H1 (cell line): ENCODE measurements at regions of chrX and their contacts with region 1.

Region 1: DNA sequence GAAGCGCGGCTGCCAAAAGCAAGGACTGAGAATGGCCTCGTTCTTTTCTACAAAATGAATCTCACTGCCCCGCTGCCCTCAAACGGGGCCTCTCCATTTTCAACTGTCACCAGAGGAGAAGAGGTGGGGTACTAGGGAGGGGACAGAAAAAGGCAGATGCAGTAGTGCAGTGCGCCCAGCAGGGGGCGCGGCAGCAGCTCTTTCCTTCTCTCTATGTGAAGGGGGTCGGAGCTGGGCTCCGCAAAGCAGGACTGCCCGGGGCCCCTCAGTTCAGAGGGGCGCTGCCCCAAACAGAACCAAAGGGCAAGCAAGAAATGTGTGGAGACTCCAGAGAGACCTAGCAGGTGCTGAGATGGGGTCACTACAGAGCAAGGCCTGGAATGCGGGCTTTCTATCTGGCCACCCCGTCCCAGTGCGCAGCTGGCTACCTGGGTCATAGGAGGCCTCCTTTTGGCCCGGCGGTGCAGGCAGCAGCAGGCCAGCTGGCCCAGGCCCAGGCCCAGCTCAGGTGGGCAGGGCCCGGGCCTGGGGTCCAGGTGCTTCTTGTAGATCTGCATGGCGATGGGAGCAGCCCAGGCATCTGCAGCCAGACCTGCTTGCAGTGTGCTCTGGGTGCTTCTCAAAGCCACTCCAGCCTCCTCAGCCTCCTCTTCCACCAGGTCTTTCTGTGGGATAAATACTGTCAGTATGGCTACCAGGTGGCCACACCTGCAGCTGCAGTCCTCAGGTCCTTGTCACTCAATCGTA is 5.9 kb downstream of the IRAK1 start:
- DNase-seq: peak in 1 of 2 experiments; percentile 72
- H3K4me3 ChIP-seq: no peak overlapping the region
- H3K27ac ChIP-seq: no peak overlapping the region
- H3K4me1 ChIP-seq: peaks cover 0 to 7% (median 3%) of the 10 kb centered on the region in 4 experiments; a peak in 4 of 7 replicates
- H3K27me3 ChIP-seq: no peaks in the 10 kb centered on the region
- CTCF ChIP-seq: peak in 2 of 3 experiments; percentile 62 to 63; a peak in 3 of 4 replicates
- EP300 ChIP-seq: no peak
- POLR2A ChIP-seq: no peak
- RAD21 ChIP-seq: peak; percentile 59 to 62

Region 2: DNA sequence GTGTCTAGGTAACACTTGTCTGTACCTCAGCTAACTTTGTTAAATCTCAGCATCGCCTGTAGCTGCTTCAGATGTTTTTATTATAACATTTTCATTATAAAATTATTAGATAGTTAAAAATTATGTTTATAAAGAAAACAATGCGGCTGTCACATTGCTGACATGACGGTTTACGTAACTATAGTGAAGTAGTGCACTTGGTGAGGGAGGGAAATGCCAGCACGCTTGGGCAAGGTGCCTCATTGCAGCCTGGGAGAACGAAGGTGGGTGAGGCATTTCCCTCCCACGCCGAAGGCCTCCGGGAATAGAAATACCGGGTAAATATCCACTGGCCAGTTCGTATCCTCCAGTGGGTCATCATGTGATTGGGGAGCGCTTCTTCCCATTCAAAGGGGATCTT is 25.3 kb before region 1 on chrX:
- CTCF ChIA-PET with region 1: no interaction called
- POLR2A ChIA-PET with region 1: no interaction called
- DNase-seq: no peak
- H3K4me3 ChIP-seq: no peak overlapping the region
- H3K27ac ChIP-seq: no peak overlapping the region
- H3K4me1 ChIP-seq: no peaks in the 10 kb centered on the region
- H3K27me3 ChIP-seq: no peaks in the 10 kb centered on the region
- CTCF ChIP-seq: no peak
- EP300 ChIP-seq: no peak
- POLR2A ChIP-seq: no peak
- RAD21 ChIP-seq: no peak

Region 3: DNA sequence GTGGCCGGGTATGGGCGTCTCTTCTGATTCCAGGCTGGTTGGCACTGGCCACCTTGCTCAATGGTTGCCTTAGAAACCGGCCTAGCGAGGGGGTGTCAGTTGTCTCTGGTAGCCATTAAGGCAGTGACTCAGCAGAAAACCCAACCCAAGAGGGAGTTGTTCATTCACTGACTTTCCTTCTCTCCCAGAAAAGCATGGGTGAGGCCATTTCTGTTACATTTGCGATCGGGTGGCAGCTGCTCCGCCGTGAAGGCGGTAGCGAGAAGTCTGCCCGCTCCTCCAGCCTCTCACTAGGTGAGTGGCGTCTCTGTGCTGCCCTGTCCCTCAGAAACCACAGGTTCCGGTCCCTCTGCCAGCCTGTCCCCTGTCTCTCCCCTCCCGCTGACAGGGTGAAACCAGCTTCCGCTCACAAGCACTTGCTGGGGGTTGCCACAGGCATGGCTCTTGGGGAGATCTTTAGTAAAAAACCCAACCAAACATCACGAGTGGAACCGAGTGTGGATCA is 11.5 kb before region 1 on chrX:
- CTCF ChIA-PET with region 1: interaction called, 10 read pairs
- POLR2A ChIA-PET with region 1: interaction called, 6 read pairs
- DNase-seq: no peak
- H3K4me3 ChIP-seq: no peak overlapping the region
- H3K27ac ChIP-seq: no peak overlapping the region; the same call in 1 of the 2 replicates
- H3K4me1 ChIP-seq: peaks cover 0 to 8% (median 0%) of the 10 kb centered on the region in 4 experiments; a peak in 2 of 7 replicates
- H3K27me3 ChIP-seq: no peaks in the 10 kb centered on the region
- CTCF ChIP-seq: no peak
- EP300 ChIP-seq: no peak
- POLR2A ChIP-seq: no peak
- RAD21 ChIP-seq: no peak

Region 4: GRCh38 chrX:154025230-154025629 is 11.4 kb after region 1 on chrX:
- CTCF ChIA-PET with region 1: interaction called, 29 read pairs
- POLR2A ChIA-PET with region 1: interaction called, 7 read pairs
- DNase-seq: no peak
- H3K4me3 ChIP-seq: no peak overlapping the region
- H3K27ac ChIP-seq: no peak overlapping the region
- H3K4me1 ChIP-seq: peaks cover 2 to 25% (median 9%) of the 10 kb centered on the region in 4 experiments
- H3K27me3 ChIP-seq: no peaks in the 10 kb centered on the region
- CTCF ChIP-seq: no peak
- EP300 ChIP-seq: no peak
- POLR2A ChIP-seq: no peak
- RAD21 ChIP-seq: no peak

Region 5: DNA sequence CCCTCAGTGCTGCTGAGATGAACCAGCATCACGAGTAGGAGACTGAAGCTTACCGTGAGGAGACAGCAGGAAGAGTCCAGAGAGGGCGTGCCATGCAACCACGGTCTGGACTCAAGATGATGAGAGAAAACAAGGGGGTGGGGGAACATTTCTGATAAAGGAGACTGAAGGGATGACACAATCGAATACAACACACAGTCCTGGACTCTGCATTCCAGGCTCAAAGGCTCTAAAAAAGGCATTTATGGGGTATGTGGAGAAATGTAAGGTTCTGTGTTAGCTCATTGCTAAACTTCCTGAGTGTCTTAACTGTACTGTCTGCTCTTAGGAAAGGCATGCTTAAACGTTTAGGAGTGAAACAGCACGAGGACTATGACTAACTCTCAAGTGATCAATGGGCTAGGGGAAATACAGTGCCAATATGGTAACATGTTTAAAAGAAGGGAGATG is 26.5 kb after region 1 on chrX:
- CTCF ChIA-PET with region 1: interaction called, 11 read pairs
- POLR2A ChIA-PET with region 1: no interaction called
- DNase-seq: no peak
- H3K4me3 ChIP-seq: no peak overlapping the region
- H3K27ac ChIP-seq: no peak overlapping the region
- H3K4me1 ChIP-seq: peaks cover 2 to 13% (median 9%) of the 10 kb centered on the region in 4 experiments; a peak in 6 of 7 replicates
- H3K27me3 ChIP-seq: no peaks in the 10 kb centered on the region
- CTCF ChIP-seq: no peak
- EP300 ChIP-seq: no peak
- POLR2A ChIP-seq: no peak
- RAD21 ChIP-seq: no peak

Region 6: GRCh38 chrX:154091678-154092077 is 77.9 kb after region 1 on chrX:
- CTCF ChIA-PET with region 1: interaction called, 13 read pairs
- POLR2A ChIA-PET with region 1: interaction called, 4 read pairs
- DNase-seq: no peak
- H3K4me3 ChIP-seq: no peak overlapping the region
- H3K27ac ChIP-seq: no peak overlapping the region
- H3K4me1 ChIP-seq: peaks cover 2 to 24% (median 8%) of the 10 kb centered on the region in 4 experiments; a peak in 6 of 7 replicates
- H3K27me3 ChIP-seq: no peaks in the 10 kb centered on the region
- CTCF ChIP-seq: no peak
- EP300 ChIP-seq: no peak
- POLR2A ChIP-seq: no peak
- RAD21 ChIP-seq: no peak